AG04450 (cell line): ENCODE measurements at regions of chr6 and their contacts with region 1.

Region 1: GRCh38 chr6:99868074-99868702 is 125.8 kb downstream of the MCHR2 start:
- DNase-seq: peak; percentile 36
- H3K4me3 ChIP-seq: no peak overlapping the region
- H3K27ac ChIP-seq: no peak overlapping the region
- H3K27me3 ChIP-seq: peaks cover 10% of the 10 kb centered on the region
- CTCF ChIP-seq: peak; percentile 88

Region 2: GRCh38 chr6:98880486-98880885 is 987.7 kb before region 1 on chr6:
- CTCF ChIA-PET with region 1: no interaction called
- POLR2A ChIA-PET with region 1: no interaction called
- DNase-seq: no peak
- H3K4me3 ChIP-seq: no peak overlapping the region
- H3K27ac ChIP-seq: no peak overlapping the region
- H3K27me3 ChIP-seq: no peaks in the 10 kb centered on the region
- CTCF ChIP-seq: no peak

Region 3: DNA sequence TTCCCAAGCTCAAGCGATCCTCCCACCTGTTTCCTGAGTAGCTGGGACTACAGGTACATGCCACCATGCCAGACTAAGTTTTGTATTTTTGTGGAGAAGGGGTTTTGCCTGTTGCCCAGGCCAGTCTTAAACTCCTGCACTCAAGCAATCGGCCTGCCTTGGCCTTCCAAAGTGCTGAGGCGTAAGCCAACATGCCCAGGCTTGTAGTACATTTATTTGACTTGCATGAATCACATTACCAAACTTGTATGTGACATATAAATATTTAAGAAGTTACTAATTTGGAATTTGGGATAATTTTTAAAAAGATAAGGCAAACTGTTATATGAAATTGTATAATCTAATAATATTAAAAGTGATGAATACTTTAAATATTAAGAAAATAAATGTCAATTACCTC is 31.7 kb before region 1 on chr6:
- CTCF ChIA-PET with region 1: interaction called, 19 read pairs
- POLR2A ChIA-PET with region 1: no interaction called
- DNase-seq: no peak
- H3K4me3 ChIP-seq: no peak overlapping the region
- H3K27ac ChIP-seq: no peak overlapping the region
- H3K27me3 ChIP-seq: no peaks in the 10 kb centered on the region
- CTCF ChIP-seq: no peak

Region 4: DNA sequence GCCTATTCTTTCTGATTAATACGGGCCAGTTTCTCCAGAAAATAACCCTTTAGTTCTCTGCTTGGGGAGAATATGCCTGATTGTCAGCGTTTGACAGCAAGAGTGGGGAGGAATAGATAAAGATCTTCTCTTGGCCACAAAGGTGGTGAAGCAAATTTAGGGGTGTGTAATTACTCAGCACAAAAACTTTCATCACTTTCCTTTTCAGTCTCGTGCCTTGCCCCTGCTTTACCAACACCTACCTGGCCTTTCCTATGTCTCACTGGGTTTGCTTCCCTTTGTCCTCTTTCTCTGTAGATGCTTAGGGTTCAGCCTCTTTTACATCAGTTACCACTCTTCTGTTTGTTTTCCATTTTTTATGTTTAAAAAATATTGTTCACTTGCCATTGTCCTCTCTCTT is 26.6 kb after region 1 on chr6:
- CTCF ChIA-PET with region 1: interaction called, 13 read pairs
- POLR2A ChIA-PET with region 1: no interaction called
- DNase-seq: no peak
- H3K4me3 ChIP-seq: no peak overlapping the region
- H3K27ac ChIP-seq: no peak overlapping the region
- H3K27me3 ChIP-seq: no peaks in the 10 kb centered on the region
- CTCF ChIP-seq: no peak

Region 5: DNA sequence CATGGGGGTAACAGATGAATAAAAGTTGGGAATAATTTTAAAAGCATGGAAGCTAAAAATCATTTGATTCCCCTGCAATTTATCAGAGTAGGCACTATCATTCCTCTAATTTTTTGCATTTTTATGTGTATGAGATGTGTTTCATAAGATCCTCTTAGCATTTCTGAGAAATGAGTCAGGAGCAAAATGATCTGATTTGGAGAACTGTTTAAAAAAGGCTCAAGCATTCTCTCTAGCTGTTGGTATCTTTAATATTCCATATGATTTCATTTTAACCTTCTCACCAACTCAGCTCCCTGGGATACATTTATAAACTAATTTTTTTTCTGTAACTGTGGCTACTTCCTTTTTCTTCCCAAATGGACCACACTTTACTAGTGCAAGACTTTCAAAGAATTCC is 64.9 kb after region 1 on chr6:
- CTCF ChIA-PET with region 1: interaction called, 10 read pairs
- POLR2A ChIA-PET with region 1: no interaction called
- DNase-seq: peak; percentile 34
- H3K4me3 ChIP-seq: no peak overlapping the region
- H3K27ac ChIP-seq: no peak overlapping the region
- H3K27me3 ChIP-seq: no peaks in the 10 kb centered on the region
- CTCF ChIP-seq: no peak

Region 6: DNA sequence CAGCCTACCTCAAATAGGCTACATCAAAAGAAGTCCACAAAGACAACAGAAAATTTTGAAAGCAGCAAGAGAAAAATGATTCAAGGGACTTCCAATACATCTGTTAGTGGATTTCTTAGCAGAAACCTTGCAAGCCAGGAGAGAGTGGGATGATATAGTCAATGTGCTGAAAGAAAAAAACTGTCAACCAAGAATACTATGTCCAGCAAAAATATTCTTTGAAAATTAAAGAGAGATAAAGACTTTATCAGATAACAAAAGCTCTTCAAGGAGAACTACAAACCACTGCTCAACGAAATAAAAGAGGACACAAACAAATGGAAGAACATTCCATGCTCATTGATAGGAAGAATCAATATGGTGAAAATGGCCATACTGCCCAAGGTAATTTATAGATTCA is 91.8 kb after region 1 on chr6:
- CTCF ChIA-PET with region 1: no interaction called
- POLR2A ChIA-PET with region 1: no interaction called
- DNase-seq: no peak
- H3K4me3 ChIP-seq: no peak overlapping the region
- H3K27ac ChIP-seq: no peak overlapping the region
- H3K27me3 ChIP-seq: no peaks in the 10 kb centered on the region
- CTCF ChIP-seq: no peak

Region 7: DNA sequence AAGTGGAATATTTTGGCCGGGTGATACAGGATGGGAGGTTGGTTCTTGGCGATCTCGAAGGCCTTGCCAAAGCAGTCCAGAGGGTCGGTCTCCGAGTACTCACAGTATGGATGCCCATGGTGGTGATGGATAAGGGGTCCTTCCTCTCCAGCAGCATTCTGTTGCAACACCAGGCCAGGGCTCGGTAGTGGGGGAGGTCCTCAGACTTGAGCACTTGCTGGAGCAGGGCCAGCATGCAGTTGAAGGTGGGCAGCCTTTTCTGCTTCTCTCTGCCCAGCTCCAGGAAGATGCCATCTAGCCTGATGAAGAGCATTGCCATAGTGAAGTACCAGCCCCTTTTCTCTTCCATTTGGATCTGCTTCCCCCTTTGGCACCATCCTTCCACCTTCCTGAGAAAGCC is 225.2 kb after region 1 on chr6:
- CTCF ChIA-PET with region 1: interaction called, 359 read pairs
- POLR2A ChIA-PET with region 1: no interaction called
- DNase-seq: no peak
- H3K4me3 ChIP-seq: no peak overlapping the region
- H3K27ac ChIP-seq: no peak overlapping the region
- H3K27me3 ChIP-seq: no peaks in the 10 kb centered on the region
- CTCF ChIP-seq: no peak

Region 8: GRCh38 chr6:100116411-100117194 is 248.4 kb after region 1 on chr6:
- CTCF ChIA-PET with region 1: interaction called, 12 read pairs
- POLR2A ChIA-PET with region 1: no interaction called
- DNase-seq: peak; percentile 52
- H3K4me3 ChIP-seq: no peak overlapping the region
- H3K27ac ChIP-seq: no peak overlapping the region
- H3K27me3 ChIP-seq: peaks cover 30% of the 10 kb centered on the region
- CTCF ChIP-seq: peak; percentile 83